CD8-positive, alpha-beta T cell (primary cell): ENCODE measurements at regions of chr1 and their contacts with region 1.

Region 1: GRCh38 chr1:212455803-212456528 is 23.2 kb downstream of the NENF start:
- DNase-seq: peak; percentile 68 to 92 (median 81)
- ATAC-seq: peak; percentile 80
- H3K4me3 ChIP-seq: no peak overlapping the region
- H3K4me3 Mint-ChIP-seq: no peak overlapping the region
- H3K27ac ChIP-seq: no peak overlapping the region
- H3K27ac Mint-ChIP-seq: no peak overlapping the region
- H3K4me1 ChIP-seq: no peaks in the 10 kb centered on the region
- H3K4me1 Mint-ChIP-seq: peaks cover 2% of the 10 kb centered on the region
- H3K27me3 ChIP-seq: no peaks in the 10 kb centered on the region
- H3K27me3 Mint-ChIP-seq: no peaks in the 10 kb centered on the region
- CTCF ChIP-seq: peak; percentile 94

Region 2: DNA sequence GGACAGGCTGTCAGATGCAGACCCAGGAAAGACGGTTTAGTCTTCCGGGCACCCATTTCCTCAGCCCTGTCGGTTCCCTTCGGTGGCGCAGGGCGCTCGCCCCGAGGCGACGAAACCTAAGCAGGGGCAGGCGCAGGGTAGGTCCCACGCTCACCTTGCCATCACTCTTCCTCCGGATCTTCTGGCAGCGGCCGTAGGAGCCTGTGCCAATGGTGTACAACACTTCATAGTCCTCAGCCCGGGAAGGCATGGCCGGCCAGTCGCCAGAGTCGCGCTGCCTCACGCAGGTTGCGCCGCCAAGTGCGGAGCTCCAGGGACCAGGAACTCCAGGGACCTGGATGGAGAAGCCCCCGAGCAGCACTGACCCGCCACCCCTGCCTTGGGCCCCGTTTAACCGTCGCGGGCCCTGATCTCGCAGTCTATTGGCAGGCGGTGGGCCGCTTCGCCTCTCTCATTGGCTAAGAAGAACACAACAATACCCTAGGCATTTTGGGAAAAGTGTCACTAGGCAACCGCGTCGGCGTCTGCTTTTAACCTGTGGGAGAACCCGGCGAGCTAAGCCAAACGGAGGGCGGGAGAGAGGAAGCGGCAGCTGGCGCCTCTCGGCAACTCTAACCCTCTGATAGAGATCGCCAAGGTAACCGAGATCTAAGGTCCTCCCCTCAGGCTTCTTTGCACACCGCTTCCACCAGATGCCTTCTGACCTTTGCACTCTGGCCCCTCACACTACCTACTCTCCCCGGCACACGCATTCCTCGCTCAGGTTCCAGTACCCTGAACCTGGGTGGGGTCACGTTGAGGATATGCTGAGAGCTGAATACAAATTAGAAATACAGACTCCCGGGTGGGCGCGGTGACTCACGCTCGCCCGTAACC is 780.5 kb before region 1 on chr1 and contains the start of gene NEK2:
- CTCF ChIA-PET with region 1: interaction called, 56 read pairs
- POLR2A ChIA-PET with region 1: no interaction called
- intact Hi-C with region 1: loop called in 1 of 2 experiments (anchors 1 kb)
- DNase-seq: peak; percentile 61 to 92 (median 84)
- ATAC-seq: peak; percentile 89
- H3K4me3 ChIP-seq: peak within 1 kb of the TSS; percentile 67 to 85
- H3K4me3 Mint-ChIP-seq: peak within 1 kb of the TSS; percentile 91
- H3K27ac ChIP-seq: peak within 1 kb of the TSS; percentile 18 to 22
- H3K27ac Mint-ChIP-seq: peak within 1 kb of the TSS; percentile 76
- H3K4me1 ChIP-seq: peaks cover 7% of the 10 kb centered on the region
- H3K4me1 Mint-ChIP-seq: peaks cover 14% of the 10 kb centered on the region
- H3K27me3 ChIP-seq: no peaks in the 10 kb centered on the region
- H3K27me3 Mint-ChIP-seq: no peaks in the 10 kb centered on the region
- CTCF ChIP-seq: no peak
- total RNA-seq, gene NEK2: 0.19 to 0.35 TPM

Region 3: GRCh38 chr1:212012034-212012740 is 443.8 kb before region 1 on chr1:
- CTCF ChIA-PET with region 1: interaction called, 7 read pairs
- POLR2A ChIA-PET with region 1: no interaction called
- intact Hi-C with region 1: loop called (anchors 1 kb)
- DNase-seq: peak; percentile 24 to 78 (median 61)
- ATAC-seq: peak; percentile 100
- H3K4me3 ChIP-seq: no peak overlapping the region
- H3K4me3 Mint-ChIP-seq: no peak overlapping the region
- H3K27ac ChIP-seq: no peak overlapping the region
- H3K27ac Mint-ChIP-seq: no peak overlapping the region
- H3K4me1 ChIP-seq: no peaks in the 10 kb centered on the region
- H3K4me1 Mint-ChIP-seq: peaks cover 2% of the 10 kb centered on the region
- H3K27me3 ChIP-seq: no peaks in the 10 kb centered on the region
- H3K27me3 Mint-ChIP-seq: no peaks in the 10 kb centered on the region
- CTCF ChIP-seq: peak; percentile 98

Region 4: DNA sequence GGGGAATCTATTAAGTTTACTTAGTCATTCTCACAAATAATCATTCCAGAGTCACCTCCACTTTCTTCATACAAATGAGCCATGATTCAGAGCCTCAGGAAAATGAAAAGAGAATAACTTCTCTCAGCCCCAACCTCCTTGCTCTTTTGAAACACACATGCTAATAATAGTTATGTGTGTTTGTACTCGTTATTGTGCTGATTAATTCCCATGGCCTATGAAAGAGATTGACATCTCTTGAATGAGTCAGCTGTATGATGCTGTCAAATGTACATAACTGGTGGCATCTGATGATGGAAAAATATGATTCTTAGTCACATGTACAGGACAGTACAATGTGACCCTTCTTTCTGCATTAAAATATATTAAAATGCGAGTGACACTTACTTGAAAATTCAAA is 378.9 kb before region 1 on chr1:
- CTCF ChIA-PET with region 1: interaction called, 299 read pairs
- POLR2A ChIA-PET with region 1: interaction called, 3 read pairs
- intact Hi-C with region 1: no loop called
- DNase-seq: no peak
- ATAC-seq: no peak
- H3K4me3 ChIP-seq: no peak overlapping the region
- H3K4me3 Mint-ChIP-seq: no peak overlapping the region
- H3K27ac ChIP-seq: no peak overlapping the region
- H3K27ac Mint-ChIP-seq: no peak overlapping the region
- H3K4me1 ChIP-seq: no peaks in the 10 kb centered on the region
- H3K4me1 Mint-ChIP-seq: no peaks in the 10 kb centered on the region
- H3K27me3 ChIP-seq: no peaks in the 10 kb centered on the region
- H3K27me3 Mint-ChIP-seq: no peaks in the 10 kb centered on the region
- CTCF ChIP-seq: no peak

Region 5: DNA sequence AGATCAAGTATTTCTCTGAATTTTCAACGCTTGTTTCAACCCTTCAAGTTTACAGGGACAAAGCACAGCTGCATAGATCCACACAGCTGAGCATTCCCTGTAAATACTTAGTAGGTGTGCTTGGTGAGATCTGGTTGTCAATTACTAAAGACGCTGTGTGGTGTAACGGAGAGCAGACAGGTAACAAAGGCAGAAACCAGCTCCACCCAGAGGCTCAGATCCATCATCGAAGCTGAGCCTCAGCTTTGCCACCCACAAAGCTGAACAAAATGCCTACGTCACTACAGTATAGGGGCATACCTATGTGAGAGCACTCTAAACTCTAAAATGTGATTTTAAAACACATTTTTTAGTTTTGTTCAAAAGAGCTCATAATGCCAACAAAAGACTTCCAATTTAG is 80.0 kb before region 1 on chr1:
- CTCF ChIA-PET with region 1: interaction called, 10 read pairs
- POLR2A ChIA-PET with region 1: no interaction called
- intact Hi-C with region 1: no loop called
- DNase-seq: no peak
- ATAC-seq: no peak
- H3K4me3 ChIP-seq: no peak overlapping the region
- H3K4me3 Mint-ChIP-seq: no peak overlapping the region
- H3K27ac ChIP-seq: no peak overlapping the region
- H3K27ac Mint-ChIP-seq: no peak overlapping the region
- H3K4me1 ChIP-seq: peaks cover 4% of the 10 kb centered on the region
- H3K4me1 Mint-ChIP-seq: peaks cover 6% of the 10 kb centered on the region
- H3K27me3 ChIP-seq: no peaks in the 10 kb centered on the region
- H3K27me3 Mint-ChIP-seq: no peaks in the 10 kb centered on the region
- CTCF ChIP-seq: no peak

Region 6: GRCh38 chr1:212469701-212470458 is 13.9 kb after region 1 on chr1:
- CTCF ChIA-PET with region 1: interaction called, 77 read pairs
- POLR2A ChIA-PET with region 1: no interaction called
- intact Hi-C with region 1: no loop called
- DNase-seq: no peak
- ATAC-seq: no peak
- H3K4me3 ChIP-seq: no peak overlapping the region
- H3K4me3 Mint-ChIP-seq: no peak overlapping the region
- H3K27ac ChIP-seq: no peak overlapping the region
- H3K27ac Mint-ChIP-seq: no peak overlapping the region
- H3K4me1 ChIP-seq: no peaks in the 10 kb centered on the region
- H3K4me1 Mint-ChIP-seq: no peaks in the 10 kb centered on the region
- H3K27me3 ChIP-seq: no peaks in the 10 kb centered on the region
- H3K27me3 Mint-ChIP-seq: no peaks in the 10 kb centered on the region
- CTCF ChIP-seq: no peak